Caco-2 (cell line): ENCODE measurements at regions of chr15 and their contacts with region 1.

Region 1: GRCh38 chr15:84863565-84864443 is 20.7 kb upstream of the SLC28A1 start:
- DNase-seq: peak in 1 of 2 experiments; percentile 13
- H3K4me3 ChIP-seq: no peak overlapping the region
- H3K4me3 Mint-ChIP-seq: no peak overlapping the region
- H3K27ac Mint-ChIP-seq: no peak overlapping the region
- H3K4me1 ChIP-seq: peaks cover 12% of the 10 kb centered on the region
- H3K4me1 Mint-ChIP-seq: no peaks in the 10 kb centered on the region
- H3K27me3 ChIP-seq: no peaks in the 10 kb centered on the region
- H3K27me3 Mint-ChIP-seq: no peaks in the 10 kb centered on the region
- CTCF ChIP-seq: no peak

Region 2: GRCh38 chr15:84840741-84841429 is 22.9 kb before region 1 on chr15:
- CTCF ChIA-PET with region 1: no interaction called
- POLR2A ChIA-PET with region 1: no interaction called
- intact Hi-C with region 1: no loop called
- DNase-seq: no peak
- H3K4me3 ChIP-seq: no peak overlapping the region
- H3K4me3 Mint-ChIP-seq: no peak overlapping the region
- H3K27ac Mint-ChIP-seq: no peak overlapping the region
- H3K4me1 ChIP-seq: no peaks in the 10 kb centered on the region
- H3K4me1 Mint-ChIP-seq: no peaks in the 10 kb centered on the region
- H3K27me3 ChIP-seq: no peaks in the 10 kb centered on the region; the same call in 1 of the 2 replicates
- H3K27me3 Mint-ChIP-seq: peaks cover 5% of the 10 kb centered on the region
- CTCF ChIP-seq: no peak

Region 3: GRCh38 chr15:84883433-84883832 is 19.6 kb after region 1 on chr15:
- CTCF ChIA-PET with region 1: interaction called, 10 read pairs
- POLR2A ChIA-PET with region 1: no interaction called
- intact Hi-C with region 1: no loop called
- DNase-seq: peak in 1 of 2 experiments; percentile 19
- H3K4me3 ChIP-seq: no peak overlapping the region
- H3K4me3 Mint-ChIP-seq: no peak overlapping the region
- H3K27ac Mint-ChIP-seq: no peak overlapping the region
- H3K4me1 ChIP-seq: peaks cover 18% of the 10 kb centered on the region
- H3K4me1 Mint-ChIP-seq: peaks cover 6% of the 10 kb centered on the region
- H3K27me3 ChIP-seq: no peaks in the 10 kb centered on the region
- H3K27me3 Mint-ChIP-seq: no peaks in the 10 kb centered on the region
- CTCF ChIP-seq: no peak

Region 4: GRCh38 chr15:84904419-84904818 is 40.6 kb after region 1 on chr15:
- CTCF ChIA-PET with region 1: no interaction called
- POLR2A ChIA-PET with region 1: no interaction called
- intact Hi-C with region 1: no loop called
- DNase-seq: no peak
- H3K4me3 ChIP-seq: no peak overlapping the region
- H3K4me3 Mint-ChIP-seq: no peak overlapping the region
- H3K27ac Mint-ChIP-seq: no peak overlapping the region
- H3K4me1 ChIP-seq: peaks cover 5% of the 10 kb centered on the region; the same call in 1 of the 2 replicates
- H3K4me1 Mint-ChIP-seq: peaks cover 12% of the 10 kb centered on the region
- H3K27me3 ChIP-seq: no peaks in the 10 kb centered on the region; the same call in 1 of the 2 replicates
- H3K27me3 Mint-ChIP-seq: peaks cover 2% of the 10 kb centered on the region
- CTCF ChIP-seq: no peak